Activated CD4-positive, alpha-beta T cell treated with anti-CD3 and anti-CD28 coated beads, Interleukin-2, amount 10 ng/mL, durations not matched to agents 24 days and 14 days (primary cell): ENCODE measurements at regions of chr15 and their contacts with region 1.

Region 1: GRCh38 chr15:101692801-101693598 is 31.3 kb downstream of the TARS3 start:
- DNase-seq: peak; percentile 74
- H3K4me3 Mint-ChIP-seq: peak overlapping the region; percentile 68
- H3K27ac Mint-ChIP-seq: peak overlapping the region; percentile 91
- H3K4me1 Mint-ChIP-seq: peaks cover 56% of the 10 kb centered on the region
- H3K27me3 Mint-ChIP-seq: no peaks in the 10 kb centered on the region

Region 2: DNA sequence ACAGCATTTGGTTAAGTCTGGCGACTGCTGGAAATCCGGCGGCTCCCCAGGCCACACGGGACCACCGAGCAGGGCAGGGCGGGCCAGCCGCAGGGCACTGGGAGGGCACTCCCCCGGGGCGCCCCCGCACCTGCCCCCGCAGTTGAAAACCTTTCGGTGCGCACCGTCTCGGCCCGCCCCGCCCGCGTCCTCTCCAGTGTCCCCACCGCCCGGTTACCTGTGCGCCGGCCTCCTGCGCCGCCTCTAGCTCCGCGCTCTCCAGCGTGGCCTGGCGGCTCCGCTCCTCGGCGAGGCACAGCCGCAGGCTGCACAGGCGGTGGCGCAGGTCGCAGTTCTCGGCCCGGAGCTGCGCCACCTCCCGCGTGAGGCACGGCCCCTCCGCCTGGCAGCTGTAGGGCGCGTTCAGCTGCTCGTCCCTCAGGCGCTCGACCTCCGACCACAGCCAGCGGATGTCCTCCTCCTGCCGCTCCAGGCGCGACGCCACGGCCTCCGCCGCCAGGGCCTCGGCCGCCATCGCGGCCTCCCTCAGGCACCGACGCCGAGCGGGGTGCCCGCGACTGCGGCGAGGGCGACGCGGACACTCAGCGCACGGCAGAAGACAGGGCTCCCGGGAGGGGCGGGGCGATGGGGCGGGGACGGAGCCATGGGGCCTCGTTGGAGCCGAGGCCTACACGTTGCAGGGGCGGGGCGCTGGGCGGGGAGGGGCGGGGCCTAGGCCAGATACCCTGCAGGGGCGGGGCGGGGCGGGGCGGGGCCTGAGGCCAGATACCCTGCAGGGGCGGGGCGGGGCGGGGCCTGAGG is 31.1 kb after region 1 on chr15 and contains the start of gene TARS3:
- intact Hi-C with region 1: loop called (anchors 2 kb)
- DNase-seq: peak; percentile 95
- H3K4me3 Mint-ChIP-seq: peak within 1 kb of the TSS; percentile 87
- H3K27ac Mint-ChIP-seq: peak within 1 kb of the TSS; percentile 95
- H3K4me1 Mint-ChIP-seq: peaks cover 14% of the 10 kb centered on the region
- H3K27me3 Mint-ChIP-seq: no peaks in the 10 kb centered on the region
- total RNA-seq, gene TARS3: 11.5 and 13.2 TPM in 2 replicates